Activated T-helper 1 cell treated with anti-CD3 and anti-CD28 coated beads, Interleukin-12 subunit alpha, Interleukin-12 subunit beta, Interleukin-2, Interleukin-4 antibody, amounts not matched to agents 30 ng/mL and 10 ng/mL and 1 ng/mL, durations not matched to agents 14 hours and 24 hours and 36 hours (primary cell): ENCODE measurements at regions of chr6 and their contacts with region 1.

Region 1: GRCh38 chr6:43369174-43370022 is at the start of gene ZNF318:
- DNase-seq: peak; percentile 93
- H3K4me3 Mint-ChIP-seq: peak within 1 kb of the TSS; percentile 86
- H3K27ac Mint-ChIP-seq: peak within 1 kb of the TSS; percentile 91
- H3K4me1 Mint-ChIP-seq: peaks cover 36% of the 10 kb centered on the region
- H3K27me3 Mint-ChIP-seq: peaks cover 2% of the 10 kb centered on the region
- total RNA-seq, gene ZNF318: 9.1 and 9.7 TPM in 2 replicates

Region 2: DNA sequence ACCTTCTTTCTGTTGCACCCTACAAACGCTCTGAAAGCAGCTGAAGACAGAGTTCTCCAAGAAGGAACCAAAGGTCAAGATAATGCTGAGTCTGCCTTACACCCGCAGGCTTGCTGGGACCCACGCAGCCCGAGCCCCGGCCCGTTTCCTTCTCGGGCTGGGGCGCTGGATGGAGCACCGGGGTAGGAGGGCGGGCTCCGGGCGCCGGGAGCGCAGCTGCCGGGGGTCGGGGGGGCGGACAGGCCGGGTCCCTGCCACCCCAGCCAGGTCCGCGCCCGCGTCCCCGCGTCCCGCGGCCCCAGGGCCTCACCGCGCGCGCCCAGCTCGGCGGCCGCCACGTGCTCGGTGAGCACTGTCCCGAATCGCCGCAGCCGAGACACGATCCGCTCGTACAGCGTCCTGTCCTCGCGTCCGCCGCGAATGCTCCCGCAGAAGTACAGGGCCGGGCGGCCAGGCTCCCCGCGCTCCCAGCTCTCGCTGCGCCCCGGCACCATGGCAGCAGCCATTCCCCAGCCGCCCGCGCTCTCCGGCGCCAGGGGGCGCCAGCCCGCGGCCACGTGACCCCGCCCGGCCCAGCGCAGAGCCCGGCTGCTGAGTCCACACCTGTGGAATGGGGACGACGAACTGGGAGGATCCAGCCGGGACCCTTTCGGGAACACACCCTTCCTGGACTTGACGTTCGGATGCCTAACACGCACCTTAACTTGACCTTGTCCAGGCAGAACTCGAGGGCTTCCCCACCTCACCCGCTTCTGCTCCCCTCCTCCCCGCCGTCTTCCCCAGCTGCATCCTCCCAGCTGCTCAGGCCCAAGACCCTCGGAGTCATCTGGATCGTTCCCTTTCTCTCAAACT is 140.2 kb before region 1 on chr6 and contains the start of gene DNPH1:
- intact Hi-C with region 1: loop called (anchors 1 kb)
- DNase-seq: peak; percentile 78
- H3K4me3 Mint-ChIP-seq: peak within 1 kb of the TSS; percentile 92
- H3K27ac Mint-ChIP-seq: peak within 1 kb of the TSS; percentile 89
- H3K4me1 Mint-ChIP-seq: peaks cover 47% of the 10 kb centered on the region
- H3K27me3 Mint-ChIP-seq: peaks cover 22% of the 10 kb centered on the region
- total RNA-seq, gene DNPH1: 65.8 and 71.6 TPM in 2 replicates

Region 3: DNA sequence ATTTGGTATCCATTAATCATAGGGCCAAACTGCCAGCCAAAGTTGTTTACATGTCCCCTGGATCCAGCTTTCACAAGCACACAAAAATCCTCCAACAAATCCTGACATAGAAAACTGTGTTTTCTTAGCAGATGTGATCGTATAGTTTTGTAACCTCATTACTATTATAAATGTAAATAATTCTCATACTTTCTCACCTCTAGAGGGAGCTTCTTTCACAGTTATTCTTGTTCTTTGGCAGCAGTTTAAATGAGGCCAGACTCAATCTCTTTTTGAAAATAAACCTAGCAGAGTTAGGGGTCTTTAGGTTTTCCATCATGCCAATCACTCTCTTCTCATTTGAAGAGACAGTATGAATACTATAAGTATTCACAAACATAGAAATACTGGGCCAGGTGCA is 17.1 kb after region 1 on chr6:
- intact Hi-C with region 1: loop called (anchors 1 kb)
- DNase-seq: no peak
- H3K4me3 Mint-ChIP-seq: no peak overlapping the region
- H3K27ac Mint-ChIP-seq: no peak overlapping the region
- H3K4me1 Mint-ChIP-seq: peaks cover 56% of the 10 kb centered on the region
- H3K27me3 Mint-ChIP-seq: peaks cover 43% of the 10 kb centered on the region

Region 4: GRCh38 chr6:43427406-43428111 is 58.2 kb after region 1 on chr6 and contains the start of gene ABCC10:
- intact Hi-C with region 1: loop called (anchors 1 kb)
- DNase-seq: peak; percentile 93
- H3K4me3 Mint-ChIP-seq: peak within 1 kb of the TSS; percentile 96
- H3K27ac Mint-ChIP-seq: peak within 1 kb of the TSS; percentile 96
- H3K4me1 Mint-ChIP-seq: peaks cover 17% of the 10 kb centered on the region
- H3K27me3 Mint-ChIP-seq: no peaks in the 10 kb centered on the region
- total RNA-seq, gene ABCC10: 40.5 and 43.6 TPM in 2 replicates

Region 5: GRCh38 chr6:43506667-43507471 is 137.5 kb after region 1 on chr6:
- intact Hi-C with region 1: loop called (anchors 1 kb)
- DNase-seq: peak; percentile 74
- H3K4me3 Mint-ChIP-seq: no peak overlapping the region
- H3K27ac Mint-ChIP-seq: no peak overlapping the region
- H3K4me1 Mint-ChIP-seq: peaks cover 13% of the 10 kb centered on the region
- H3K27me3 Mint-ChIP-seq: peaks cover 18% of the 10 kb centered on the region

Region 6: DNA sequence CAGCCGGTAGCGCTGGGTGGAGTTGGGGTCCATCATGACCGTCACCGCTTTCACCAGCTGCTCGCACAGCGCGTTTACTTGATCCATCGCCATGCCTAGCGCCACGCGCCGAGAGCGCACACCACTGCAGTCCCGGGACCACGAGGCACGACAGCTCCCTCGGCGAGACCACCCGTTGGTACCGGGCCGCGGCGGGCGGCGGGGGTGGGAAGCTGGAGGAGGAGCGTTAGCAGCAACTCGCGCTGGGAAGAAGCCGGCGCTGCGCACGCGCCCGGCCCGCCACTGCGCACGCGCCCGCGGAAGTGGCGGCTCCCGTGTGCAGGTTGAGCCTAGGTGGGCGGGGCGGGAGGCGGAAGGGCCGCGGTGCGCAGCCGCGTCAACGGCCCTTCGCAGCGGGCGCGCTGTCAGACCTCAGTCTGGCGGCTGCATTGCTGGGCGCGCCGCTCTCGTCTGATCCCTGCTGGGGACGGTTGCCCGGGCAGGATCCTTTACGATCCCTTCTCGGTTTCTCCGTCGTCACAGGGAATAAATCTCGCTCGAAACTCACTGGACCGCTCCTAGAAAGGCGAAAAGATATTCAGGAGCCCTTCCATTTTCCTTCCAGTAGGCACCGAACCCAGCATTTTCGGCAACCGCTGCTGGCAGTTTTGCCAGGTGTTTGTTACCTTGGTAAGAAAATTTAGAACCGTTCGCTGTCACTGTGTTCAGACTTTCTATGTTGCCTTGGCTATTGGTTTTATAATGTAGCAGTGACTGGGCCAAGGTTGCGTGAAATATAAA is 206.6 kb after region 1 on chr6 and contains the starts of genes POLH and XPO5:
- intact Hi-C with region 1: loop called (anchors 1 kb)
- DNase-seq: peak; percentile 90
- H3K4me3 Mint-ChIP-seq: peak within 1 kb of the TSS; percentile 91
- H3K27ac Mint-ChIP-seq: peak within 1 kb of the TSS; percentile 86
- H3K4me1 Mint-ChIP-seq: peaks cover 43% of the 10 kb centered on the region
- H3K27me3 Mint-ChIP-seq: no peaks in the 10 kb centered on the region
- total RNA-seq, gene POLH: 35.7 and 39.1 TPM in 2 replicates
- total RNA-seq, gene XPO5: 135 and 149 TPM in 2 replicates

Region 7: GRCh38 chr6:44642870-44643529 is 1273.6 kb after region 1 on chr6:
- intact Hi-C with region 1: no loop called
- DNase-seq: no peak
- H3K4me3 Mint-ChIP-seq: no peak overlapping the region
- H3K27ac Mint-ChIP-seq: peak overlapping the region; percentile 84
- H3K4me1 Mint-ChIP-seq: peaks cover 21% of the 10 kb centered on the region
- H3K27me3 Mint-ChIP-seq: peaks cover 2% of the 10 kb centered on the region